CD8-positive, alpha-beta memory T cell (primary cell): ENCODE measurements at regions of chr9 and their contacts with region 1.

Region 1: DNA sequence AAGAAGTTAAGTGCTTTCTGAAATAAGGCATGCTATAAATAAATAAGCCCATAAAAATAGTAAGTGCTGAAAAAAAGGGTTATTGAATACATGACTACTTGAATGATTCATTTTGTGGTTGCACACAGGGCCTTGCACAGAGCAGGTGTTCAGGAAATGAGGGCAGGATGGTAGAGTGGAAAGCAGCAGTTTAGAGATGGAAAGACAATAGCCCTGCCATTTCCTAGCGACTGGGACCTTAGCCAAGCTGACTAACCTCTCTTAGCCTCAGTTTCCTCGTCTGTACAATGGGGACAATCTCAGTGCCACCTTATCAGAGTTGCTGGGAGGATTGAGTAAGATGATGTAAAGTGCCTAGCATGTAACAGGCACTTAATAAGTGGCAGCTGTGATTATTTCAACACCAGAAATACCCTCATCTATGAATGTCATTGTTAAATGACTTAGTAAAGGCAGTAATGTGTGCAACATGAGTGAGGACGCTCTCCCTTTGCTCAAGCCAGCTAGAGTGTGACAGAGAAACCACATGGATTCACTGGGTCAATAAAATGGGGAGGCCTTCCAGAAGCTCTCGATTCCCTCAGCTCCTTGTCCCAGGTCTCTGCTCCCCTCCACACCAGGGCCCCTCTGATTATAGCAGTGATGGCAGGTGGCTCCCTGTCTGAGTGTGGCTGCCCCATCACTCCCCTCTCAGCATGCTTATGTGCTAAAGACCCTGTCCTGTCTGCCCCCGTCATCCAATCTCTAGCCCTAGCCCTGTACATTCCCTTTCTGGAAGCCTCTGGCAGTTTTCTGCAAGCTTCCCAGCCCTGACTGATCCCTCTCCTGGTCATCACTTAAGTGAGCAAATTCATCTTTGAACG is 16.0 kb upstream of the PHF19 start:
- DNase-seq: peak; percentile 34 to 83 (median 59)
- H3K4me3 ChIP-seq: peak overlapping the region; percentile 4
- H3K4me3 Mint-ChIP-seq: peak overlapping the region; percentile 1 to 90 (median 74)
- H3K27ac ChIP-seq: no peak overlapping the region
- H3K27ac Mint-ChIP-seq: peak overlapping the region; percentile 67 to 98 (median 96)
- H3K4me1 ChIP-seq: peaks cover 88% of the 10 kb centered on the region
- H3K4me1 Mint-ChIP-seq: peaks cover 57 to 91% (median 63%) of the 10 kb centered on the region in 3 donors
- H3K27me3 ChIP-seq: no peaks in the 10 kb centered on the region
- H3K27me3 Mint-ChIP-seq: no peaks in the 10 kb centered on the region

Region 2: GRCh38 chr9:120750421-120750820 is 142.6 kb before region 1 on chr9:
- CTCF ChIA-PET with region 1: no interaction called
- POLR2A ChIA-PET with region 1: no interaction called
- DNase-seq: no peak
- H3K4me3 ChIP-seq: no peak overlapping the region
- H3K4me3 Mint-ChIP-seq: no peak overlapping the region
- H3K27ac ChIP-seq: no peak overlapping the region
- H3K27ac Mint-ChIP-seq: no peak overlapping the region
- H3K4me1 ChIP-seq: no peaks in the 10 kb centered on the region
- H3K4me1 Mint-ChIP-seq: no peaks in the 10 kb centered on the region
- H3K27me3 ChIP-seq: no peaks in the 10 kb centered on the region
- H3K27me3 Mint-ChIP-seq: no peaks in the 10 kb centered on the region

Region 3: GRCh38 chr9:120875954-120876841 is 16.8 kb before region 1 on chr9:
- CTCF ChIA-PET with region 1: interaction called, 18 read pairs
- POLR2A ChIA-PET with region 1: interaction called, 71 read pairs
- DNase-seq: peak; percentile 64 to 88 (median 75)
- H3K4me3 ChIP-seq: peak overlapping the region; percentile 57
- H3K4me3 Mint-ChIP-seq: peak overlapping the region; percentile 63 to 93 (median 82)
- H3K27ac ChIP-seq: peak overlapping the region; percentile 86
- H3K27ac Mint-ChIP-seq: peak overlapping the region; percentile 66 to 99 (median 93)
- H3K4me1 ChIP-seq: peaks cover 46% of the 10 kb centered on the region
- H3K4me1 Mint-ChIP-seq: peaks cover 39 to 74% (median 61%) of the 10 kb centered on the region in 3 donors
- H3K27me3 ChIP-seq: no peaks in the 10 kb centered on the region
- H3K27me3 Mint-ChIP-seq: peaks cover 0 to 2% of the 10 kb centered on the region in 2 donors

Region 4: DNA sequence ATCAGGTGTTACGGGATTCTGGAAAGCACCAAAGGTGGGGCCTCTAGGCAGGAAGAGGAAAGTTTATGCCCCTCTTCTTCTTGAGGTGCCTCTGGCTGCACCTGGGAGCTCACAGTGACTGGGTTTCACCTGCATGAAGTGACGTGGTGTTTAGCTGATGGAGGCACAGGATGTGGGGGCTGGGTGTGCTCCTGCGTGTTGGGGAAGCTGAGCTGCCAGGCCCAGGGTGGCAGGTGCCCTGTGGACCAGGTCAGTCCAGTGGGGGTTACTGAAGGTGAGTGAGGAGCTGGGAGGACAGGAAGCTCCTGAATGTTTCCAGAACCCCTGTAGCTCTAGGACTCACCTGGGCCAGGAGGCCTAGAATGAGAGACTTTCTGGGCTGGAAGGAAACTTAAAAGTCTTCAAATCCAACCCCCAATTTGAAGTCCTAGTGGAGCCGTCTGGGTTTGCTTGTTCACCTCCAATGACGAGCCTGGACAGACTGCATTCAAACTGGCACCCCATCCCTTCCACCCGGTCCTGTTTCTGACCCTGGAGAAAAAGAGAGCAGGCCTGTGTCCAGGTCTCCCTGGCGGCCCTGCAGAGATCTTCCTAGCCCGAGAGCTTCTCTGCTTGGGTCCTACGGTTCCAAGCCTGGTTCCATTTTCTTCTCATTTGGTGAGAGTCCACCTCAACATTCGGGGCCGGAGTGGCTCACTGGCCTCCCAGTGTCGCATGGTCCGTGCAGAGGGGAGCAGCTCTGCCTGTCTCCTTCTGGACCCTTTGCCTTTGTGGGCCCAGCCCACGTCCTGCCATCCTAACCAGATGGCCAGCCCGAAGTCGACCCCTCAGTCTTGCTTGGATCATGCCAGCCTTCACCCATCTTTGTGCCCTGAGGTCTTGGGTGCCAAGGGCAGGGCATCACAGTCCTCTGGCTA is 11.3 kb after region 1 on chr9:
- CTCF ChIA-PET with region 1: interaction called, 38 read pairs
- POLR2A ChIA-PET with region 1: interaction called, 48 read pairs
- DNase-seq: peak; percentile 47 to 85 (median 69)
- H3K4me3 ChIP-seq: no peak overlapping the region
- H3K4me3 Mint-ChIP-seq: peak overlapping the region; percentile 19 to 78 (median 59)
- H3K27ac ChIP-seq: peak overlapping the region; percentile 63
- H3K27ac Mint-ChIP-seq: peak overlapping the region; percentile 92 to 98 (median 96)
- H3K4me1 ChIP-seq: peaks cover 85% of the 10 kb centered on the region
- H3K4me1 Mint-ChIP-seq: peaks cover 74 to 91% (median 87%) of the 10 kb centered on the region in 3 donors
- H3K27me3 ChIP-seq: no peaks in the 10 kb centered on the region
- H3K27me3 Mint-ChIP-seq: no peaks in the 10 kb centered on the region

Region 5: GRCh38 chr9:120916588-120916987 is 23.6 kb after region 1 on chr9:
- CTCF ChIA-PET with region 1: interaction called, 5 read pairs
- POLR2A ChIA-PET with region 1: interaction called, 92 read pairs
- DNase-seq: no peak
- H3K4me3 ChIP-seq: no peak overlapping the region
- H3K4me3 Mint-ChIP-seq: peak overlapping the region in 6 of 7 donors; percentile 47 to 88 (median 74)
- H3K27ac ChIP-seq: no peak overlapping the region
- H3K27ac Mint-ChIP-seq: peak overlapping the region; percentile 1 to 99 (median 87)
- H3K4me1 ChIP-seq: peaks cover 82% of the 10 kb centered on the region
- H3K4me1 Mint-ChIP-seq: peaks cover 75 to 98% (median 86%) of the 10 kb centered on the region in 3 donors
- H3K27me3 ChIP-seq: no peaks in the 10 kb centered on the region
- H3K27me3 Mint-ChIP-seq: no peaks in the 10 kb centered on the region

Region 6: DNA sequence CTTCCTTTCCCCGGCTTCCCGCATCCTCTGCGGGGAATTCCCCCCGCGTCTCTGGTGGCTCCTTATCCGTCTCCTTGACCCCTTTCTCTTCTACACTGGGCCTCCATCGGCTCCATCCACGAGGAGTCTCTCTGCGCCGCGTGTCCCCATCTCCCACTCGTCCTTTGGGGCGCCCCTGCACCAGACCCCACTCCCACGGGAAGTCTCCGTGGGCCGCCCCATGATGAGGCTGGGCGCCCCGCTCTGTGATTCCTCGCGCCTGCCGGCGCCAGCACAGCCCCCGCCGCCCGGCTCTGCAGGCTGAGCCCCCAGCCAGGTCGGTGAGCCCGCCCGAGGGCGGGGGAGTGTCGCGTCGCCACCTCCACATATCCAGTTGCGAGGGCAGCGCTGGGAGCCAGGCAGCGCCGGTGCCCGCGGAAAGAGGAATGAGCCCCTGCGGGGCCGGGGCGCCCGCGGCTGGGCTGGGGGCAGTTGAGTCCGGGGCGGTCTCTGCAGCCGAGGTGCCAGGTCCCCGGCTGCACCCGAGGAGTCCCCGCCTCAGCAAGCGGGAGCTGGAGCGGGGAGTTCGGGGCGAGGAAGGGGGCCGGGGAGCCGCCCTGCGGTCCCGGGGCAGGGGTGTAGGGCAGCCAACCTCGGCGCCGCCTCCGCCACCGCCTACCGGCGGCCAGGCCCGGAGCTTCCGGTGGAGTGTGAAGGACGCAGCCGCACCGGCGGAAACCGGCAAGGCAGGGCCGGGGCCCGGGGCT is 35.7 kb after region 1 on chr9:
- CTCF ChIA-PET with region 1: interaction called, 27 read pairs
- POLR2A ChIA-PET with region 1: interaction called, 116 read pairs
- DNase-seq: peak; percentile 65 to 89 (median 79)
- H3K4me3 ChIP-seq: peak overlapping the region; percentile 76
- H3K4me3 Mint-ChIP-seq: peak overlapping the region; percentile 91 to 99 (median 96)
- H3K27ac ChIP-seq: peak overlapping the region; percentile 85
- H3K27ac Mint-ChIP-seq: peak overlapping the region; percentile 95 to 100 (median 99)
- H3K4me1 ChIP-seq: peaks cover 86% of the 10 kb centered on the region
- H3K4me1 Mint-ChIP-seq: peaks cover 82 to 90% (median 85%) of the 10 kb centered on the region in 3 donors
- H3K27me3 ChIP-seq: no peaks in the 10 kb centered on the region
- H3K27me3 Mint-ChIP-seq: no peaks in the 10 kb centered on the region

Region 7: DNA sequence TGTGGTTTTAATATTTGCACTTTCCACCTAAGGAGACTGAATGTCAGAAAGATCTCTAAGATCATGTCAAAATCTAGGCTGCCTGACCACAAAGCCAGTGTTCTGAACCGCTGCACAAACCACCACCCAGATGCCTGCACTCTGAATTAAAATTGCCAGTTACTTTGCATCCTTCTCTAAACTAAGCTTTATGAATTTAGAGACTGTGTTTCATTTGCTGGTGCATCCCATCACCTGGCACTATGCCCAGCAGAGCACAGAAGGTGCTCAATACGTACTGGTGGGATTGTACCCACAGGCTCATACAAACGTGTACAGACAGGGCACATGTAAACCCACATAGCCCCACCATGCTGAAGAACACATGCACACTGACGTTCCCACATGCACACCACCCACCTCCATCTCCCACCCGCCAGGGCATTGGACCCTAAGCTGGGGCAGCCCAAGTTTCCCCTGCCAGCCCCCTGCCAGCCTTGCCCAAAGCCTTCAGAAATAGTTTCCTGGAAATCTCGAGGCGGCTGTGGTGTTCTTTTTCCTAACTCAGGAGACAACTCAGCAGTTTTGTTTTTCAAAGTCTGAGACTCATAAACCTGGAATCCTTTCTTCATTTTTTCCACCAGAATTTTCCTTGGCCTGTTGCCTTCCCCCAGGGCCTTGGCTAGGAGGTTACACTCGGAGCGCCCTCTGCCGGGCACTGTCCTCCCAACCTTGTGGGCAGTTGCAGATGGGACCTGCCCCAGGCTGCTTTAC is 43.2 kb after region 1 on chr9:
- CTCF ChIA-PET with region 1: interaction called, 25 read pairs
- POLR2A ChIA-PET with region 1: interaction called, 116 read pairs
- DNase-seq: peak; percentile 78 to 90 (median 85)
- H3K4me3 ChIP-seq: peak overlapping the region; percentile 10
- H3K4me3 Mint-ChIP-seq: peak overlapping the region; percentile 3 to 85 (median 60)
- H3K27ac ChIP-seq: peak overlapping the region; percentile 52
- H3K27ac Mint-ChIP-seq: peak overlapping the region; percentile 88 to 96 (median 92)
- H3K4me1 ChIP-seq: peaks cover 68% of the 10 kb centered on the region
- H3K4me1 Mint-ChIP-seq: peaks cover 58 to 62% (median 58%) of the 10 kb centered on the region in 3 donors
- H3K27me3 ChIP-seq: no peaks in the 10 kb centered on the region
- H3K27me3 Mint-ChIP-seq: no peaks in the 10 kb centered on the region

Region 8: GRCh38 chr9:120965344-120966012 is 72.5 kb after region 1 on chr9:
- CTCF ChIA-PET with region 1: no interaction called
- POLR2A ChIA-PET with region 1: no interaction called
- DNase-seq: no peak
- H3K4me3 ChIP-seq: no peak overlapping the region
- H3K4me3 Mint-ChIP-seq: no peak overlapping the region
- H3K27ac ChIP-seq: no peak overlapping the region
- H3K27ac Mint-ChIP-seq: no peak overlapping the region
- H3K4me1 ChIP-seq: no peaks in the 10 kb centered on the region
- H3K4me1 Mint-ChIP-seq: no peaks in the 10 kb centered on the region
- H3K27me3 ChIP-seq: no peaks in the 10 kb centered on the region
- H3K27me3 Mint-ChIP-seq: no peaks in the 10 kb centered on the region

Region 9: DNA sequence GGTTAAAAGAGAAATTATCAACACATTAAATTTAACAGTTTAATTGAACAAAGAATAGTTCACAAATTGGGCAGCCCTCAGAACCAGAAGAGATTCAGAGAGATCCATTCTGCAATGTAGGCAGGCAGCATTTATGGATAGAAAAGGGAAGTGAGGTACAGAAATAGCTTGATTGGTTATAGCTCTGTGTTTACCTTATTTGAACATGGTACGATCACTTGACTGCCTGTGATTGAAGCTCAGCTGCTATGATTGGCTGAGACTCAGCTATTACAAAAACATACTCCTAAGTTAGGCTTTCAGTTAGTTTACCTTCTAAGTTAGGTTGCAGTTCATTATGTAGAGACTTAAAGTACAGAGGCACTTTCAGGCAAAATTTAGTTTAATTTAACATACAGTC is 189.1 kb after region 1 on chr9:
- CTCF ChIA-PET with region 1: no interaction called
- POLR2A ChIA-PET with region 1: no interaction called
- DNase-seq: no peak
- H3K4me3 ChIP-seq: no peak overlapping the region
- H3K4me3 Mint-ChIP-seq: no peak overlapping the region
- H3K27ac ChIP-seq: no peak overlapping the region
- H3K27ac Mint-ChIP-seq: peak overlapping the region in 3 of 8 donors; percentile 15 to 47 (median 41)
- H3K4me1 ChIP-seq: peaks cover 2% of the 10 kb centered on the region
- H3K4me1 Mint-ChIP-seq: peaks cover 23 to 51% (median 50%) of the 10 kb centered on the region in 3 donors
- H3K27me3 ChIP-seq: no peaks in the 10 kb centered on the region
- H3K27me3 Mint-ChIP-seq: no peaks in the 10 kb centered on the region